ENCODE measurements at regions of chr7 and their contacts with region 1.

Region 1: DNA sequence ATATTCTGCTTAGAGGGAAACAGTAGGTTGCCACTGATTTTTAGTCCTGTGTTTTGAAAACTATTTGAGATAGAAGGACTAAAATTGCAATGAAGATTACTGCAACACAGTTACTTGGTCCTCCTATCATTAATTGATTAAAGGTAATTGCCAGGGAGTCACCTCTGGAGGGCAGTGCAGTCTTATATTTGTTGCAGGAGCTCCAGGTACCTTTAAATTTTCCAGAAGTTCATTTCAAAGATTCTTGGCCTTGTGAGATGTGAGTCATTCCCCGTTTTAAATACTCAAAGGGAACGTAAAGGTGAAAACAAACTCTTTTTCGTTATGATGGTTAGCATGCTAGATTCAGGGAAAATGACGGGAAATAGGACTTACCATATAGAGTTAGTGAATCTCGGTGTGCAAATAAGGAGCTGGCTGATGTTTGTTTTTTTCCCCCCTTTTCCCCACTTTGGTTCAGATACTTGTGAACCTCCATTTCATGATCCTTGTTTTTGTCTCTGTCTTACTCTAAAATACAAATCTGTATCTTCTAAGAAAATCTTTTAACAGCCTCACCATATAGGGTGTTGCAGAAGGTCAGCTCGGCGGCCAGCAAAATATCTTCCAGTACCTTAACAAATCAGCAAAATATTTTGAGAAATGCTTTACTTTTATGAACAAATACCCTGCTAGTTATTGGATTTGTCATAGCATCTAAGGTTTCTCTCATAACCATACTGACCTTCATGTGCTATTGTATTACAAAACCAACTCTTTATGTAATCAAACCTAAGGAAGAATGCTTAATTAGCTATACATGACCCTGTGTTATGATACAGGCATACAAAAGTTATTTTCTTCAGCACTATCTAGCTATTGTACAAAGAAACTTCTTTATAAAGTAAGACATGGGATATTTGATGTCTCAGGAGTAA is 143.0 kb upstream of the HDAC9 start:
- DNase-seq: peak in 1 of 2 donors; percentile 17
- ATAC-seq: peak; percentile 74 to 80
- H3K4me3 ChIP-seq: no peak overlapping the region
- H3K27ac ChIP-seq: no peak overlapping the region
- H3K4me1 ChIP-seq: peaks cover 0 to 11% of the 10 kb centered on the region in 2 donors
- H3K27me3 ChIP-seq: no peaks in the 10 kb centered on the region
- CTCF ChIP-seq: peak; percentile 16 to 63 (median 52)
- POLR2A ChIP-seq: no peak

Region 2: DNA sequence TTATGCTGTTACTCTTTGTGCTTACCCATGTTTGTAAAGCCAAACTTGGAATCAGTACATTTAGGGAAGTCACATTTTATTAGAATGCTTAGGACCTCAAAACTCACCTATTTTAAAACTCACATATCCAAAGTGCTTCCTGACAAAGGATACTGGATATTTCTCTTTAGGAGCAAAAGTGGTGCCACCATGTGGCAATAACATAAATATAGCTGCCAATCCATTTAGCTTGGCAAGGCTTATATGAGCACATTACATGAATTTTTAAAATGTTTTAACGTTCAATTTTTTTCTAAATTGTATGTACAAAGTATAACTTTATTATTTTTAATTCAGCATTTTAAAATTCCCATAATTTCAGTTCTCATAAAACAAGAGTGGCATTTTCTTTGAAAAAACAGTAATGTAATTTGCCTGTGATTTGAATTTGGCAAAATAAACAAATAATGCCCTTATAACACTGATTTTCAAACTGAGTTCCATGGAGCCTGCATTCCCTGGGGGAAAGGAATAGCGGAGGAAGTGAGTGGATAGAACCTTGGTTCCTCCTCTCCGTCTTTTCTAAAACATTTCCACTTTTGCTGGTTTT is 218.4 kb after region 1 on chr7:
- in situ Hi-C with region 1: loop called (anchors 10 to 25 kb)
- intact Hi-C with region 1: loop called (anchors 1 kb)
- DNase-seq: no peak
- ATAC-seq: peak; percentile 52 to 63
- H3K4me3 ChIP-seq: no peak overlapping the region
- H3K27ac ChIP-seq: no peak overlapping the region
- H3K4me1 ChIP-seq: peaks cover 14% of the 10 kb centered on the region in 2 donors
- H3K27me3 ChIP-seq: no peaks in the 10 kb centered on the region
- CTCF ChIP-seq: peak in 4 of 5 experiments; percentile 36 to 62 (median 38)
- POLR2A ChIP-seq: no peak

Region 3: GRCh38 chr7:18655912-18656311 is 303.3 kb after region 1 on chr7:
- in situ Hi-C with region 1: loop called in 3 of 4 experiments (anchors 5 to 10 kb)
- intact Hi-C with region 1: no loop called
- DNase-seq: no peak
- ATAC-seq: no peak
- H3K4me3 ChIP-seq: no peak overlapping the region
- H3K27ac ChIP-seq: no peak overlapping the region
- H3K4me1 ChIP-seq: no peaks in the 10 kb centered on the region
- H3K27me3 ChIP-seq: no peaks in the 10 kb centered on the region
- CTCF ChIP-seq: no peak
- POLR2A ChIP-seq: no peak

Region 4: GRCh38 chr7:18666107-18666728 is 313.6 kb after region 1 on chr7:
- in situ Hi-C with region 1: loop called in 2 of 4 experiments (anchors 10 kb)
- intact Hi-C with region 1: loop called (anchors 1 kb)
- DNase-seq: peak; percentile 51 to 65
- ATAC-seq: peak; percentile 70 to 95
- H3K4me3 ChIP-seq: no peak overlapping the region
- H3K27ac ChIP-seq: no peak overlapping the region
- H3K4me1 ChIP-seq: no peaks in the 10 kb centered on the region
- H3K27me3 ChIP-seq: no peaks in the 10 kb centered on the region
- CTCF ChIP-seq: peak; percentile 58 to 94 (median 81)
- POLR2A ChIP-seq: no peak